Posterior vena cava (tissue), 2 donors: ENCODE measurements at regions of chr1 and their contacts with region 1.

Region 1: DNA sequence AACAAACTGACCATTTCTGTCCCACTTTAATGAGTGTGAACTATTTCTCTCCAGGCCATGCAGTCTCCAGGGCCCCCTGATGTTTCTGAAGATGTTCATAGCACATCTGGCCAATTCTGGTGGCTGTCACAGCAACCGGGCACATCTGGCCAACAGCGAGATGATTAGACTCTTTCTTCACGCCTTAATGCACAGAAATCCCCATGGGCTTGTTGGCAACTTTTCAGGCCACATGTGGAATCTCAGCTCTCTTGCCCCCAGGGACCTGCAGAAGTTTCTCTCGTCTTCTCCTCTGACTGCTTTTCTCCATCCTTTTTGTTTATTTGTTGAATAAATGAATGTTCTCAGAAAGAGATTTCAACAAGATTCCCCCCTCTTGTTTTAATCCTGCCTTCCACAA is 71.2 kb upstream of the HMGB4 start:
- DNase-seq: no peak

Region 2: DNA sequence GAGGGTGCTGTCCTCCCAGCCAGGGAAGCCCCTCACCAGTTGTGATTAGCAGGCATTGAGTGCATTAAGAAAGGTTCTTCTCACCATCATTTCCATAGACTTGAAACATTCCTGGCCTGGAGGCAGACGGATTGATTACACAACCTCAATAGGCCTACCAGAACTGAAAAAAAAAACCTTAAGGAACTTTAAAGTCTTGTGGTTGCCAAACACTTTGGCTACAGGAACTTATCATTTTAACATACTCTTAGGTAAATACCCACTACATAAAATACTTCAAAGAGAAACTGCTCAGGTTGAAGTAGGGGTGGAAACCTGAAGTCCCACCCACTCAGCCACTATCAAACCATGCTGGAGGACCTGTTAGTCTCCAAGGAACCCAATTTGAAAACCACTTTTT is 48.8 kb after region 1 on chr1:
- intact Hi-C with region 1: loop called in 1 of 2 experiments (anchors 2 kb)
- DNase-seq: no peak

Region 3: GRCh38 chr1:34087986-34088385 is 295.3 kb after region 1 on chr1:
- intact Hi-C with region 1: no loop called
- DNase-seq: no peak